GM23248 (cell line): ENCODE measurements at regions of chr15 and their contacts with region 1.

Region 1: DNA sequence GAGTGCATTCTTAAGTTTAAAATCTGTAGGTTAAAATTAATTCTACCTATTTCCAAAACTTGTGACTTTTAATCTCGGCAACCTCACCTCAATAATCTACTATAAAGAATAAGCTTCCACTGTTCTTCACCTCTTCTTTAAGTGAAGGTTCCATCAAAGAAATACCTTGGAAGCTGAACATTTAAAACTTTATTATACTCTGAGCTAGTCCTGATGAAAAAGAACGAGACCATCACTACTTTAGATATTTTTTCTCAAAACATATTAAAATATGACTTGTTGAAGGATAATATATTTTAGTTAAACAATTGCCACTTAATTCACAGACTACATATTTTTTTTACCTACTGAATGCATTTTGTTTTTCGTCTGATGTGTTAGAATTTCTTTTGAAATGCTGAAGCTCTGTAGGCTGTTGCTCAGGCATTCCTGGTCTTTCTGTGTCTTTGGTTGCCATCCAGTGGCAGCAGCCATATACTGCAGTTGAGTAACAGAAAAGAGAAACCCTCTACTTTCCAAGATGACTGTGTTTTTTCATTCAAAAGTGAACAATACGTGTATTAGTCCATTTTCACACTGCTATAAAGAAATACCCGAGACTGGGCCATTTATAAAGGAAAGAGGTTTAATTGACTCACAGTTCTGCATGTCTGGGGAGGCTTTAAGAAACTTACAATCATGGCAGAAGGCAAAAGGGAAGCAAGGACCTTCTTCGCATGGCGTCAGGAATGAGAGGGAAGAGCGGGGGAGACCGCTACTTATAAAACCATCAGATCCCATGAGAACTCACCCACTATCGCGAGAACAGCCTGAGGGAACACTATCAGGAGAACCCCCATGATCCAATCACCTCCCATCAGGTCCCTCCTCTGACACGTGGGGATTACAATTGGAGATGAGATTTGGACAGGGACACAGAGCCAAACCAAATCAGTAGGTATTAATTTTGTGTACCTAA is 4.5 kb upstream of the GOLGA8B start:
- DNase-seq: peak; percentile 88
- H3K4me3 ChIP-seq: peak overlapping the region; percentile 71
- H3K27ac ChIP-seq: peak overlapping the region; percentile 55
- H3K4me1 ChIP-seq: 0 out of 2 replicates have a peak, but pooled peaks cover 3% of the 10 kb centered on the region
- H3K27me3 ChIP-seq: no peaks in the 10 kb centered on the region

Region 2: DNA sequence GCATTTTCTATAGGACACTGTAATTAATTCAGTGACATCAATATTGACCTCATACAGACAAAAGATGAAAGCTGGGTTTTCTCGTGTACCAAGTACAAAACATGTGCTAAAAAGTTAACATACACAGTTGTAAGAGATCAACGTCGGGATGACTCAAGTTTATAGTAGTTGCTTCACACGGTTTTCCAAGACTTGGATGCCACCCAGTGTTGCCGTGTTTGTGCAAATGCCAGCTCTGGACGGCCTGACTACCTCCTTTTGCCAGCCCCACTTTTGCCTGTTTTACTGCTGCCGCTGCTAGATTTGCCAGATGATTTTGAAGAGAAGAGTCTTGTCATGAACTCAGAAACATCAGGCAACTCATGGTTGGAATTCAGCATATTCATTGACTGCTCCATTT is 503.9 kb before region 1 on chr15:
- in situ Hi-C with region 1: loop called (anchors 25 kb)
- DNase-seq: peak; percentile 94
- H3K4me3 ChIP-seq: no peak overlapping the region
- H3K27ac ChIP-seq: peak overlapping the region; percentile 50
- H3K4me1 ChIP-seq: peaks cover 14% of the 10 kb centered on the region
- H3K27me3 ChIP-seq: no peaks in the 10 kb centered on the region

Region 3: DNA sequence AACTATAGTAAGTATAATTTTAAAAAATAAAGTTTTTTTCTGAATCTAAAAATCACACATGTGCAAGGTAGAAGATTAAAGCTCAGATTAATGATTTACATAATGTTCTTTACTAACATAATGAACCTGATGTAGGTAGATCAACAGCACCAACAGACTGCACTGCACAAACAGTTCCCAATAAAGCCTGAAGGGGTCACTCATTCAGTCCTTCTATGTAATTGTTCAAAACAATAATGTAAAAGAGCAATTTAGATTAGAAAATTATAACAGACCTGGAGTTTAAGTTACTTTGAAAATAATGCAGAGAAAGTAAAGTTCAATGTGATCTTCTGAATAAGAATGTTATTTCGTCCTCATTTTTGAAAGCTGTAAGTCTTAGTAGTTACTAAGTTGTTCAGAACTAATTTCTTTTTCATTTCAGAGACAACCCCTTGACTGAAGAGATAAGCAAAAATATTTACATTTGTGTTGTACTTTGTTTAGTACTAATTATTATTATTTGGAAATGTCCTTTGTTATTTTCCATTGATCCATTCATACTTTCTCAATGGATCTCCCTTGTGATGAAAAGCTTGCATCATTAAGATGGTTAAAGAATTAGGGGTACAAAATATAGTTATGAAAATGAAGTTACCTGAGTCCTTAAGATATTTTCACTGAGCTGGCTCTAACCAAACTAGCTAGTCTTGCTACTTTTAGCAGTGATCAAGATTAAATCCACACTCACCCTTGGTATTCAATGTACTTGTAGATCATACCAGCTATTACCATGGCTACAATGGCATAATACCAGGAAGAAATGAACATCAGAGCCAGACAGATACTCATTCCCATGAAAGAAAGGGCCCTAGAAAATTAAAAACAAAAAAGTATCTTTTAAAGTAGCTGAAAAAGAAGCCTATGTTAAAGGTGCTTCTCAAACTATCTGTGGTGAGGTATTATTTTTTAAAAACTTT is 346.3 kb before region 1 on chr15:
- in situ Hi-C with region 1: loop called (anchors 25 kb)
- DNase-seq: peak; percentile 63
- H3K4me3 ChIP-seq: no peak overlapping the region
- H3K27ac ChIP-seq: 0 out of 2 replicates have a peak overlapping the region, but pooled peaks have one; percentile 17
- H3K4me1 ChIP-seq: peaks cover 34% of the 10 kb centered on the region
- H3K27me3 ChIP-seq: no peaks in the 10 kb centered on the region

Region 4: DNA sequence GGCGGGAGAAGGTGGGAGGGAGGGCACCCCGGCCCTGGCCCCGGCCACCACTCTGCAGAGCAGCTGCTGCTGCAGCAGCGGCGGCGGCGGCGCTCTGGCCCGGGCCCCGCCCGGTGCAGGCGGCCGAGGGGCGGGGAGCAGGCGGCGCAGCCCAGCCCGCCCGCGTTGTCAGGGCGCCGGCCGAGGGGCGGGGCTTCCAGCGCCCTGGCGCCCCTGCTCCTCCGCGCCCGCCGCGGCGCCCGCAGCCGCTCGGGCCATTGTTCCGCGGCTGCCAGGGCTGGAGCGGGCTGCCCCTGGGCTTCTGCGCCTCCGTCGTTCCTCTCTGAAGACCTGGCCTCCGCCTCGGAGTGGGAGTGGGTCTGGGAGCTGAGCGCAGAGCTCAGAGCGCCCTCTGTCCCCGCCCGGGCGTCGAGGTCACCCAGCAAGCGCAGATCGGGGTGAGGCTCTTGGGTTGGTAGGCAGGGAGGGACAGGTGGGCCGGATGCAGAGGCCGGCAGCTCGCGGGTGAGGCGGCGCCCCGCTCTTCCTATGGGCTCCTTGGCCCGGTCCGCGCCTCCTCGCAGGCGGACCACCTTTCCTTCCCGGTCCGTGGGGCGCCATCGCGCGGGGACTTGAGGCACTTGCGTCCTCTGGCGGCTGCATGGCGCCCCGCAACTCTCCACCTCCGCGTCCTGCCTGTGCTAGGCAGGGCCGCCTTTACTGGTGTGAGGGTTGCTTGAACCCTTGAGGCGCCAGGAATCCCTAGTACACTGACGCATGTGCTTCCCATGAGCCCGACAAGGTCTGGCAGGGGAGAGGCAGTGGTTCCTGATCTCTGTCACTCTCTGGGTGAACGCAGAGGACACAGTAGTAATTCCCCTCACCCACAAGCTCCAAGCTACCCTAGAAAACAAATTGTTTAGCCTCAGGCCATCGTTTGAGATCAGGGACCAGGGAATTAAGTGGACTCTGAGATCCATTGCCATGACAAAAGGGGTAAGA is 220.6 kb before region 1 on chr15 and contains the start of gene LPCAT4:
- in situ Hi-C with region 1: loop called (anchors 25 kb)
- DNase-seq: peak; percentile 96
- H3K4me3 ChIP-seq: peak within 1 kb of the TSS; percentile 92
- H3K27ac ChIP-seq: peak within 1 kb of the TSS; percentile 77
- H3K4me1 ChIP-seq: no peaks in the 10 kb centered on the region; the same call in 1 of the 2 replicates
- H3K27me3 ChIP-seq: no peaks in the 10 kb centered on the region
- total RNA-seq, gene LPCAT4: 17.5 and 34.1 TPM in 2 replicates